Right ventricle myocardium inferior (tissue), 1 donor: ENCODE measurements at regions of chr5 and their contacts with region 1.

Region 1: GRCh38 chr5:179023528-179024430 is at the start of gene ZNF879:
- DNase-seq: peak; percentile 96
- ATAC-seq: peak; percentile 99
- total RNA-seq, gene ZNF879: 3.5 TPM

Region 2: GRCh38 chr5:178940569-178941360 is 83.0 kb before region 1 on chr5 and contains the start of gene ZNF454:
- intact Hi-C with region 1: loop called (anchors 1 kb)
- DNase-seq: peak; percentile 94
- ATAC-seq: peak; percentile 99
- total RNA-seq, gene ZNF454: 1.8 TPM